Activated naive CD4-positive, alpha-beta T cell treated with anti-CD3 and anti-CD28 coated beads for 36 hours (primary cell): ENCODE measurements at regions of chr2 and their contacts with region 1.

Region 1: GRCh38 chr2:88590998-88591613 is 36.2 kb downstream of the EIF2AK3 start:
- DNase-seq: peak; percentile 60
- H3K4me3 Mint-ChIP-seq: no peak overlapping the region
- H3K27ac Mint-ChIP-seq: no peak overlapping the region
- H3K4me1 Mint-ChIP-seq: no peaks in the 10 kb centered on the region
- H3K27me3 Mint-ChIP-seq: no peaks in the 10 kb centered on the region

Region 2: DNA sequence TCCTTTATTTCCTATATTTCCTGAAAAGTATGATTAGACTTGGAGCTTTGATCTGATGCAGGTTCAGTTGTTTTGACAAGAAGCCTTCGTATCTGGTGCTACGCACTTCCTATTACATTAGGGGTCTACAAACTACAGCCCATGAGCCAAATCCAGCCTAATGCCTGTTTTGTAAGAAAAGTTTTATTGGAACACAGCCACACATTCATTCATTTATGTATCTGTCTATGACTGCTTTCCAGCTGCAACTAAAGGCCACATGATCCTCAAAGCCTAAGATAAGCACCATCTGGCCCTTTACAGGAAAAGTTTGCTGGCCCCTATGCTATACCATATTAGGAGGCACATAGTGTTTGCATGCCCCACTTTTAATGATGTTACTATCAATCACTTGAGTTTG is 10.2 kb after region 1 on chr2:
- CTCF ChIA-PET with region 1: no interaction called
- intact Hi-C with region 1: no loop called
- DNase-seq: no peak
- H3K4me3 Mint-ChIP-seq: no peak overlapping the region
- H3K27ac Mint-ChIP-seq: no peak overlapping the region
- H3K4me1 Mint-ChIP-seq: peaks cover 35% of the 10 kb centered on the region
- H3K27me3 Mint-ChIP-seq: no peaks in the 10 kb centered on the region

Region 3: DNA sequence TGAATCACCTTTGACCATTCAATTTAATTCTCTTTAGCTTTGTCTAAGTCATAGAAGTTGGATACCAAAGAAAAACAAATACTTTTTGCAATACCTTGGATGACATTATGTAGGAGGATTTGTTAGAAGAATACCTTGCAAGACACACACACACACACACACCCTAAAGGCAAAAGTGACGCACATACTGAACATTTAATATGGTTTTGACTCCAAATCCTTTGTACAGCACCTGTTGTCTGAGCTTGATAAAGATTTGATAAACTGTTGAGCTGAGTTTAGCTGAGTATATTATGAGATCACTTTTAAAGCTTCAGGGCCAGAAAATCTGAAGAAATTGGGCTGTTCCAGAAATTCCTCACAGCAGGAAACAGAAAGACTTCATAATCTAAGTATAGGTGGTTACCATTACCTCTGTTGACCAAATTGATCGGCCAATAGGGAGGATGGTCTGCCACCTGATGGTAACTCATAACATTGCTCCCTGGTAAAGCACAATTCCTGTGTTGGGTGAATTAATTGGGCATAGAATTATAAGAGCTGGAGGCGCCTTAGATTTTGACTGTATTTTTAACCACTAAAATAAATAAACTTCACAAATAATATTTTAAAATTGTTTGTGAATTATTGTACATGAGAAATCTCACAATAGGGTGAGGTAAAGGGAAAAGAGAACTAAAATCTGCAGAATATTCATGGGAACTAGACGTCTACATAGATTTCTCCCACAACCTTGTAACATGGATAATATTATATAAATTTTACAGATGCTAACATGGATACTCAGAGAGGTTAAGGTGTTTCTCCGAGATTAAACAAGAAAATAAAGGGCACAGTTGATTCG is 78.5 kb after region 1 on chr2:
- CTCF ChIA-PET with region 1: interaction called, 139 read pairs
- intact Hi-C with region 1: loop called (anchors 1 kb)
- DNase-seq: peak; percentile 55
- H3K4me3 Mint-ChIP-seq: no peak overlapping the region
- H3K27ac Mint-ChIP-seq: no peak overlapping the region
- H3K4me1 Mint-ChIP-seq: no peaks in the 10 kb centered on the region
- H3K27me3 Mint-ChIP-seq: no peaks in the 10 kb centered on the region